Sciatic nerve (tissue), 2 donors: ENCODE measurements at regions of chrX and their contacts with region 1.

Region 1: GRCh38 chrX:65985922-65986588 is 53.8 kb downstream of the VSIG4 start:
- DNase-seq: no peak
- ATAC-seq: peak; percentile 90

Region 2: DNA sequence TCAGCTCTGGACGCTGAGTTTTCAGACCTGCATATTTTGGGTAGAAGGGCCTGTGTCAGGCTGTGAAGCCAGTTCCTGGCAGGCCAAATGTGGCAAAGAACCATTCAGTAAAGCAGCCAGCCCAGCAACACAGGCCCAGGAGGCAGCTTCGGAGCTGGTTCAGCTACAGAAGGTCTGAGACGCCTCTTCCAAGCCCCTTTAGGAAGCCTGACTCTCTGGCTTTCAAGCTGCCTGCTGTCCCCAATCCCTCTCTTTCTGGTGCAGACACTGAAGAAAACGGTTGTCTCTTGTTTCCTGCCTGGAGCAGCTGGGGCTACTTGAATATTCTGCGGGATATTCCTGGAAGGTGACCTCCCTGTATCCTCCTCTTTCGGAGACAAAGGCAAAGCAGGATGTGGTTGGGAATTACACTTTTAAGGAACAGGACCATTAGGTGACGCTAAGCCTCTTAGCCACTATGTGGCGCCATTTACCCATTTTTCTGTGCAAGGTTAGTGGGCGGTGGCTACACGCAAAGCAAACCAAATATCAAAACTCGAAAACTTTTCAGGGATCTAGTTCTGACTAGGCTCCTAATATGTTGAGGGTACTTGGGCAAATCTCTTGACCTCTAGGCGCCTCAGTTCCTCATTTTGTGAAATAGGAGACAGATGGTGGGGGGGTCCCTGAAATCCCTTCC is 404.3 kb before region 1 on chrX:
- intact Hi-C with region 1: loop called (anchors 10 kb)
- DNase-seq: peak; percentile 74
- ATAC-seq: peak; percentile 93

Region 3: GRCh38 chrX:65900850-65901844 is 84.9 kb before region 1 on chrX:
- intact Hi-C with region 1: no loop called
- DNase-seq: no peak
- ATAC-seq: no peak

Region 4: DNA sequence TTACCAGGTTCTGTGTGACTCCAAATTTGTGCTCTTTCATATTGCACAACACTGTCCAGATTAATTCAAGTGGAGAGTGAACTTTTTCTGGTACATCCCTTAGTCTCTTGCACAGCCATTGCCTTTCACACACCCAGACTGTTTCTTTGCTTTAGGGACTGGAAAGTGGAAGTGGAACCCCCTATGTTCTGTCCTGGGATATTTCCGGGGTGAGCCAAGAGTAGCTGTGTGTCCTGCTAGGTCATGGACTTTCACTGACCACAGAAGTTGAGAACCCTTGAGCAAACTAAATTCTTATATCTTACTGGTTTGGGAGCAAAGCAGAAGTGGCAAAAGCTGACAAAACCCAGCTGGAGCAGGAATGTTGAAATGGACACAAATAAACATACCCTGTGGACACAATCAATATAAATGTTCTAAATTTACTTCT is 64.1 kb after region 1 on chrX:
- intact Hi-C with region 1: no loop called
- DNase-seq: no peak
- ATAC-seq: peak; percentile 86